Left ventricle myocardium superior (tissue), 1 donor: ENCODE measurements at regions of chr3 and their contacts with region 1.

Region 1: GRCh38 chr3:25789596-25790556 is at the start of gene OXSM:
- DNase-seq: peak; percentile 94
- ATAC-seq: peak; percentile 99
- total RNA-seq, gene OXSM: 15.5 TPM

Region 2: GRCh38 chr3:25664810-25665314 is 125.0 kb before region 1 on chr3 and contains the start of gene TOP2B:
- intact Hi-C with region 1: loop called (anchors 10 kb)
- DNase-seq: peak; percentile 97
- ATAC-seq: peak; percentile 98
- total RNA-seq, gene TOP2B: 113 TPM

Region 3: GRCh38 chr3:25945836-25946235 is 156.0 kb after region 1 on chr3:
- intact Hi-C with region 1: no loop called
- DNase-seq: no peak
- ATAC-seq: no peak